Right ventricle myocardium inferior (tissue), 1 donor: ENCODE measurements at regions of chr19 and their contacts with region 1.

Region 1: GRCh38 chr19:54168174-54168917 is 4.6 kb downstream of the TMC4 start:
- DNase-seq: peak; percentile 96
- ATAC-seq: peak; percentile 90

Region 2: DNA sequence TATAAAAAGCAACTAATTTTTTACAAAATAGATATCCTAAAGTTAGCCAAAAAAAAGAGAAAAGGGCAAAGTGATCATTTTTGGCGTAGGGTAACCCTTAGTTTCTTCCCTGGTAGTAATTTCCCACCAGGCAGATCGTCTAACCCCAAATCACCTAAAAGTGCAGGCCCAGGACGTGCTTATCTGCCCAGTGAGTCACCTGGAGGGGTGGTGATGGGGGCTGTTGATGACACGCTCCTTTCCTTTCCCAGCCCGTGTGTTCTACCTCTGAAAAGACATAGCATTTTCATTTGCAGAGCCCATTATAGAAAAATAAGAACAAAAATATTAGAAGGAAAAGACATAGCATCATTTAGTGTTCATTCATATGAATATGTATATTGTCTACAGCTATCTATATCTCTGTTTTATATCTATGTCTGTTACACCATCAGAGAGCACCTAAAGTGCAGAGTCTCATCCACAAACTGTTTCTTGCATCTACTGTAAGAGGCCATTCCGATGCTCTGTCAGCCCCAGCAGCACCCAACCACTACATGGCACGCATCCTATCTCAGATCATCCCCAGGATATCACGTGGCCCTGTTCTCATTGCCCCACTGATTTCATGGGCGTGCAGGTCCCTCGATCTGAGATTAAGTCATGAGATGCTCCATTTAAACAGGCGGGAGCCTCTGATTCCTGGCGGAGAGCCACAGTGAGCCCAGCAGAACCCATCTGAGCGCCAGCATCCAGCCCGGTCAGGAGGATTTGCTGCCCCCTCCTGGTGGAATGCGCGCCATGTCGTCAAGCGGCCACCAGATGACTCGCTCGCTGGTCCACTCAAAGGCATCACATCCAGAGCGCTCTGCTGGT is 63.0 kb after region 1 on chr19:
- intact Hi-C with region 1: loop called (anchors 1 kb)
- DNase-seq: peak; percentile 94
- ATAC-seq: peak; percentile 85